PC-9 (cell line): ENCODE measurements at regions of chr21 and their contacts with region 1.

Region 1: DNA sequence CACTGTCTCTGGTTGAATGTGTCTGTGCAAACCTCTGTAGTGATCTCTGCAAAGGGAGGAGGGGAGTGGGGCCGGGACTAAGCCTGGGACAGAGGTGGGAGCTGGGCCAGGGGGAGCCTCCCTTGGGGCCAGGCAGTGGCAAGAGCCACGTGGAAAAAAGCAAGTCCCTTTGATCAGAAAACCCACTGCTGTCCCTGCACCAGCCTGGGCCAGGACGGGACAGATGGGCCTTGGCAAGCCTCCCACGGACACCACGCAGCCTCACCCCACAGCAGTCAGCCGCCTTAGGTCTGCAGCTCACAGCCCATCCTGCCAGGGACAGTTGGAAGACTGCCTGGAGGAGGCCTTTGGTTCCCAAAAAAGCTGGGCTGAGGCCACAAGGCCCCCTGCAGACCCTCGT is 11.7 kb upstream of the TRAPPC10 start:
- DNase-seq: no peak
- H3K4me3 ChIP-seq: no peak overlapping the region
- H3K27ac ChIP-seq: no peak overlapping the region
- H3K4me1 ChIP-seq: no peaks in the 10 kb centered on the region
- H3K27me3 ChIP-seq: no peaks in the 10 kb centered on the region
- CTCF ChIP-seq: no peak

Region 2: DNA sequence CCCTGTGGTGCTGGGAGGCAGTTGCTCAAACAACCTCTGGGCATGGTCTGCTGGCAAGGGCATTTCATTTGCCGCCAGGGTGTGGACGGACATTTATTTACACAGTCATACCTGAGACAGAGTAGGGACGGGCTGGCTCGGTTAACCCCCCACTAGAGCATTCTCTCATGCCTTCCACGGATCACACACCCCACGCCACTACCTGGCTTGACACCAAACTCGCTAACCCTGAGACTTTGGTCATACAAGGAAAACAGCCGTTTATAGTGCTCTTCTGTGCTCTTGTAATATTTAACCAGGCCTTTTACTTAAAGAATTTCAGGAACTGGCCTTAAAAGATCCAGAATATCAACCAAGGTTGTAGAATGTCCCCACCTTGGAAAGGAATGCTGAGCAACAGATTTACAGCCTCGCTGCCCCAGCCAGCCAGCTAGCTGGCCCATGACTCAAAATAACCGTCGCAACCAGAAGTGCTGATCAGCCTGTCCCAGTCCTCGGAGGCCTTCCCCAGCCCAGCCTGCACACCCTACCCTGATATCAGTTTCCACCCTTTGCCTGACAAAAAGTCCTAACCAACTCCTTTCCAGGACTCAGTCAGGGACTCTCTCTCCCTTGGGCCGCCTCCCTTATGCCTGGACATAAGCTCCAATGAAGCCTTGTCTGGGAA is 287.9 kb before region 1 on chr21:
- CTCF ChIA-PET with region 1: no interaction called
- POLR2A ChIA-PET with region 1: no interaction called
- intact Hi-C with region 1: no loop called
- DNase-seq: peak; percentile 84 to 94
- H3K4me3 ChIP-seq: peak overlapping the region; percentile 72; the same call in 1 of the 2 replicates
- H3K27ac ChIP-seq: peak overlapping the region; percentile 100
- H3K4me1 ChIP-seq: peaks cover 29% of the 10 kb centered on the region
- H3K27me3 ChIP-seq: no peaks in the 10 kb centered on the region
- CTCF ChIP-seq: no peak

Region 3: DNA sequence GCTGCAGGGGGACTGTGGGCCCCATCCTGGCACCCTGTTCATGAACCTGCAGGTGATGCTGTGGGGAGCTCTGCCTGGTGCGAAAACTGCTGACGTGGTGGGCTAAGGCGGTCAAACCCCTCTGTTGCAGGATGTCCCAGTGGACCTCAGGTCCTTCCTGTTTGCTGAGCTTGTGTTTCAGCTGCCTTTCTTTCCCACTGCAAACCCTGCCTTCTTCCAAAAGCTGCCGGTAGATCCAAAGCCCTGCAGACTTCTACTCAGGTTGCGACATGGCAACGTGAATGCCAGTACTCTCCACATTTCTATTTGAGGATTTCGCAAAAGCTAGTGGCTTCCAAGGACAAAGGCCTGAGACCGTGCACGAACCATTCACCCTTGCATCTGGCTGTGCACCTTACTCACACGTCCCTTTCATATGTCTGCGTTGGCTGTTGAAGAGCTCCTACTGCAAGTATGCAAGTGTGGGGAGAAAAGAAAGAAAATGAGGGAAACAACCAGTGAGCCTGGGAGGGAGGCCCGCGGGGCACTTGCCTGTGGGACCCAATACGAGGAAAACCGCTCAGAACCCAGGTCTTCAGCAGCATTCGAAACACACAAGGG is 217.2 kb before region 1 on chr21:
- CTCF ChIA-PET with region 1: no interaction called
- POLR2A ChIA-PET with region 1: no interaction called
- intact Hi-C with region 1: no loop called
- DNase-seq: peak in 1 of 2 experiments; percentile 80
- H3K4me3 ChIP-seq: peak overlapping the region; percentile 42; the same call in 1 of the 2 replicates
- H3K27ac ChIP-seq: peak overlapping the region; percentile 100
- H3K4me1 ChIP-seq: peaks cover 63% of the 10 kb centered on the region
- H3K27me3 ChIP-seq: no peaks in the 10 kb centered on the region
- CTCF ChIP-seq: no peak

Region 4: DNA sequence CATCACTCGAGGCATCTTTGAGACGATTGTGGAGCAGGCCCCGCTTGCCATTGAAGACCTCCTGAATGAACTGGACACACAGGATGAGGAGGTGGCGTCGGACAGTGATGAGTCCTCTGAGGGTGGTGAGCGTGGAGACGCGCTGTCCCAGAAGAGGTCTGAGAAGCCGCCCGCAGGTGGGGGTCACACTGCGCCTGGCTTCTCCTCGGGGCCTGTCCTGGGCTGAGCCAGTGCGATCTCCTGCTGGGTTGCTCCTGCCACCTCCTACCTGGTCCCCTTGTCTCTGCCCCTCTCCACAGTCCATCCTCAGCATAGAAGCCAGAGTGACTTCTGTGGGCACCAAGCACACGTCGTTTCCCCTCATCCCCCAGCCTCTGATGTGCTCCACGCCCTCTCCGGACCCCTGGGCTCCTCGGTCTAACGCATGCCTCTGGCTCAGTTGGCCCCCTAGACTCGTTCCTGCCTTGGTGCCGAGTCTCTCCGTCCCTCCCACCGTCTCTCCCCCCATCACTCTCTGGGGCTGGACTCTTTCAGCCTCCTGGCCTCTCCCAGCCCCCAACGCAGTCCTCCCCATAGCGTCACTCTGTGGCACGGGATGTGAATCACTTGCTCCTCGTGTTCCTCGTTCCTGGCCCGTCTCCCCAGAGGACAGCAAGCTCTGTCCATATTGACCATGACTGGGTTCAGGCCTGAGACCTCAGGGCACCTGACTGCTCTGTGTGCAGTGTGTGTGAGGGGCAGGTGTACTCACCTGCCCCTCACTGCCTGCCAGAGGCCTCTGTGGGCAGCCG is 202.2 kb before region 1 on chr21:
- CTCF ChIA-PET with region 1: interaction called, 12 read pairs
- POLR2A ChIA-PET with region 1: no interaction called
- intact Hi-C with region 1: no loop called
- DNase-seq: no peak
- H3K4me3 ChIP-seq: no peak overlapping the region
- H3K27ac ChIP-seq: no peak overlapping the region
- H3K4me1 ChIP-seq: no peaks in the 10 kb centered on the region
- H3K27me3 ChIP-seq: no peaks in the 10 kb centered on the region
- CTCF ChIP-seq: no peak

Region 5: GRCh38 chr21:44043613-44044012 is 43.3 kb after region 1 on chr21:
- CTCF ChIA-PET with region 1: no interaction called
- POLR2A ChIA-PET with region 1: no interaction called
- intact Hi-C with region 1: no loop called
- DNase-seq: no peak
- H3K4me3 ChIP-seq: no peak overlapping the region
- H3K27ac ChIP-seq: no peak overlapping the region
- H3K4me1 ChIP-seq: no peaks in the 10 kb centered on the region
- H3K27me3 ChIP-seq: no peaks in the 10 kb centered on the region
- CTCF ChIP-seq: no peak